ENCODE measurements at regions of chr17 and their contacts with region 1.

Region 1: DNA sequence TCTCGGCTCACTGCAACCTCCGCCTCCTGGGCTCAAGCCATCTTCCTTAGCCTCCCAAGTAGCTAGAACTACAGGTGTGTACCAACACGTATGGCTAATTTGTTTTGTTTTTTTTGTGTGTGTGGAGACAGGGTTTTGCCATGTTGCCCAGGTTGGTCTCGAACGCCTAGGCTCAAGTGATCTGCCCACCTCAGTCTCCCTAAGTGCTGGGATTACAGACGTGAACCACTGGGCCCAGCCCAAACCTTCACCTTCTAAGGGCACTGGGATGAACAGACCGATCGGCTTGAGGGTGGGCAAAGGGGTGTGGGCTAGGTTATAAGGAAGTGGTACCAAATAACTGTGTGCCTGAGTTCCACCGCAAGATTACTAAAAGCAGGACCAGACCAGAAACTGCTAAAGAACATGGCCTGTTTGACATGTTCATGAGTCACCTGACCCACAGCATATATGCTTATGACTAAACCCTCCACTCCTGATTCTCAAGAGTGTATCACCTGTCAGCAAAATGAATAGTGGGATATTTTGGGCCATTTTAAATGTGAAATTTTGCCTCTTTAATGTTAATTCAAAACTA is 8.1 kb downstream of the TMEM97 start:
- DNase-seq: no peak
- H3K4me3 Mint-ChIP-seq: peak overlapping the region; percentile 43
- H3K27ac Mint-ChIP-seq: no peak overlapping the region
- H3K4me1 Mint-ChIP-seq: peaks cover 41% of the 10 kb centered on the region
- H3K27me3 Mint-ChIP-seq: no peaks in the 10 kb centered on the region
- CTCF ChIP-seq: no peak

Region 2: DNA sequence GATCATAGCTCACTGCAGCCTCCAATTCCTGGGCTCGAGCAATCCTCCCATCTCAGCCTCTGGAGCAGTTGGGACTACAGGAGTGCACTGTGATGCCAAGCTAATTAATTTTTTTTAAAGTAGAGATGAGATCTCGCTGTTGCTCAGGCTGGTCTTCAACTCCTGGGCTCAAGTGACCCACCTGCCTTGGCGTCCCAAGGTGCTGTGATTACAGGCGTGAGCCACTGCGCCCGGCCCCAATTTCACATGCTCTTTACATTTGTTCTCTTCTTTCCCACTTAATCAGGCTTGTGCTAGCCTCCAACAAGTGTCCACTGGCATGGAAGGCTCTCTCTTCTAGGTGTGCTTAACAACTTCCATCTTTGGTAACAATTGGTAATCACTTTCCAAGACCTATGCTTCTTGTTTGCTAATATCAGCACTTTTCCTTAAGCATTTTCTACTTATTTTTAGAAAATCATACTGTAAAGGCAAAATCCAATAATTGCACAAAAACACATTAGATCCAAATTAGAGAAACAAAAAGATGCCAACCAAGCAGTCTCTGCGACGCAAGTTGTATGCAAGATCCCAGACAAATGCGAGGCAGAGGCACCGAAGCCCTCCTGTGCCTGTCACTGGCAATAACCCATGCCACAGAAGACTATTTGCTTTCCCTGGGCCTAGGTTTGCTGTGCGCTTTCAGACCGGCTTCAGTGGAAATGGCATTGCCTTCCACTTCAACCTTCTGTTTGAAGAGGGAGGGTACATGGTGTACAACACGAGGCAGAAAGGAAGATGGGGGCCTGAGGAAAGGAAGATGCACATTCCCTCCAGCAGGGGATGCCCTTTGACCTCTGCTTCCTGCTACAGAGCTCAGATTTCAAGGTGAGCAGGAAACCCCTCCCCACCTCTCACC is 579.4 kb before region 1 on chr17:
- CTCF ChIA-PET with region 1: no interaction called
- intact Hi-C with region 1: no loop called
- DNase-seq: no peak
- H3K4me3 Mint-ChIP-seq: no peak overlapping the region
- H3K27ac Mint-ChIP-seq: no peak overlapping the region
- H3K4me1 Mint-ChIP-seq: no peaks in the 10 kb centered on the region
- H3K27me3 Mint-ChIP-seq: no peaks in the 10 kb centered on the region
- CTCF ChIP-seq: peak; percentile 44

Region 3: GRCh38 chr17:28193241-28193640 is 133.9 kb before region 1 on chr17:
- CTCF ChIA-PET with region 1: no interaction called
- intact Hi-C with region 1: no loop called
- DNase-seq: peak; percentile 4
- H3K4me3 Mint-ChIP-seq: no peak overlapping the region
- H3K27ac Mint-ChIP-seq: no peak overlapping the region
- H3K4me1 Mint-ChIP-seq: no peaks in the 10 kb centered on the region
- H3K27me3 Mint-ChIP-seq: no peaks in the 10 kb centered on the region
- CTCF ChIP-seq: no peak

Region 4: GRCh38 chr17:28228126-28228857 is 98.8 kb before region 1 on chr17:
- CTCF ChIA-PET with region 1: interaction called, 3 read pairs
- intact Hi-C with region 1: loop called (anchors 5 kb)
- DNase-seq: no peak
- H3K4me3 Mint-ChIP-seq: peak overlapping the region; percentile 85
- H3K27ac Mint-ChIP-seq: peak overlapping the region; percentile 68
- H3K4me1 Mint-ChIP-seq: peaks cover 14% of the 10 kb centered on the region
- H3K27me3 Mint-ChIP-seq: no peaks in the 10 kb centered on the region
- CTCF ChIP-seq: no peak

Region 5: GRCh38 chr17:28258347-28259206 is 68.5 kb before region 1 on chr17:
- CTCF ChIA-PET with region 1: no interaction called
- intact Hi-C with region 1: loop called (anchors 5 kb)
- DNase-seq: no peak
- H3K4me3 Mint-ChIP-seq: no peak overlapping the region
- H3K27ac Mint-ChIP-seq: no peak overlapping the region
- H3K4me1 Mint-ChIP-seq: peaks cover 11% of the 10 kb centered on the region
- H3K27me3 Mint-ChIP-seq: no peaks in the 10 kb centered on the region
- CTCF ChIP-seq: no peak